Activated B cell treated with CpG ODN at 0.5 μM for 24 hours (primary cell): ENCODE measurements at regions of chr1 and their contacts with region 1.

Region 1: GRCh38 chr1:93021539-93022134 is 57.4 kb upstream of the MTF2 start:
- DNase-seq: no peak
- ATAC-seq: peak; percentile 91
- H3K4me3 Mint-ChIP-seq: no peak overlapping the region
- H3K27ac Mint-ChIP-seq: no peak overlapping the region
- H3K4me1 Mint-ChIP-seq: peaks cover 11% of the 10 kb centered on the region
- H3K27me3 Mint-ChIP-seq: peaks cover 2% of the 10 kb centered on the region
- CTCF ChIP-seq: peak; percentile 97

Region 2: DNA sequence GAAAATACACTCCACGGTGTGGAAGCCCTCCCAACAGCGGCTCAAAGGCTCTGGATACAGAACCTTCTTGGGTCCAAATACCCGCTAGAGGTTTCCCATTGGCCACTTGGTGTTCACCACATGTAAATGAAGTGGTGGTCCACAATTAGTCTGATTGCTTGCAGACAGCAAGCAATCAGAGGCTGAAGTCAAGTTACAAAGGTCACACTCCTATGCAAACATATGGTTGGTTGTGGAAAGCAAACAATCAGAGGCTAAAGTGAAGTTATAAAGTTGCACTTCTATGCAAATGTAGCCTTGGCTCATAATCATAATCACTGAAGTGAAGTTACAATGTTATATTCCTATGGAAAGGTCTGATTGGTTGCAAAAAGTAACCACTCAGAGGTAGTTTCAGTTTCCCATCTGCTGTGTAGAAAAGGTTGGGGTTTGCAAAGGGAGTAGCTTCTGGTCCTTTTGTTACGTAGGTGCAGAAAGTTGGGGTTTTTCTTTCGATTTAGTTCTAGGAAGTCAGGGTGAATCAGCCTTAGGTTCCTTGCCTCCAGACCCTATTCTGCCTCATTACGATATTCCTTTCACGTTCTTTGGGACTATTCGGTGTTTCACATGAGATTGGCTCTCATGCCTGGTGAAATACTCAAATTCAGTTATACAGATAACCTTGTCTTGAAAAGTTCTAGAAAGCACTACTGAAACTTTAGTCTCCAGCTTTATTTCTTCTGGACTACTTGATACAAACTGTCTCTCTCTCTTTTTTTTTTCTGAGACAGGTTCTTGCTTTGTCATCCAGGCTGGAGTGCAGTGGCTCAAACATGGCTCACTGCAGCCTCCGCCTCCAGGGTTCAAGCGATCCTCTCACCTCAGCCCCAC is 20.8 kb after region 1 on chr1:
- CTCF ChIA-PET with region 1: no interaction called
- POLR2A ChIA-PET with region 1: no interaction called
- intact Hi-C with region 1: no loop called
- DNase-seq: no peak
- ATAC-seq: peak; percentile 88
- H3K4me3 Mint-ChIP-seq: peak overlapping the region; percentile 75
- H3K27ac Mint-ChIP-seq: peak overlapping the region; percentile 80
- H3K4me1 Mint-ChIP-seq: peaks cover 24% of the 10 kb centered on the region
- H3K27me3 Mint-ChIP-seq: no peaks in the 10 kb centered on the region
- CTCF ChIP-seq: no peak

Region 3: GRCh38 chr1:93061895-93062792 is 40.5 kb after region 1 on chr1:
- CTCF ChIA-PET with region 1: interaction called, 97 read pairs
- POLR2A ChIA-PET with region 1: no interaction called
- intact Hi-C with region 1: loop called (anchors 1 kb)
- DNase-seq: no peak
- ATAC-seq: peak; percentile 82
- H3K4me3 Mint-ChIP-seq: no peak overlapping the region
- H3K27ac Mint-ChIP-seq: no peak overlapping the region
- H3K4me1 Mint-ChIP-seq: no peaks in the 10 kb centered on the region
- H3K27me3 Mint-ChIP-seq: peaks cover 13% of the 10 kb centered on the region
- CTCF ChIP-seq: no peak

Region 4: DNA sequence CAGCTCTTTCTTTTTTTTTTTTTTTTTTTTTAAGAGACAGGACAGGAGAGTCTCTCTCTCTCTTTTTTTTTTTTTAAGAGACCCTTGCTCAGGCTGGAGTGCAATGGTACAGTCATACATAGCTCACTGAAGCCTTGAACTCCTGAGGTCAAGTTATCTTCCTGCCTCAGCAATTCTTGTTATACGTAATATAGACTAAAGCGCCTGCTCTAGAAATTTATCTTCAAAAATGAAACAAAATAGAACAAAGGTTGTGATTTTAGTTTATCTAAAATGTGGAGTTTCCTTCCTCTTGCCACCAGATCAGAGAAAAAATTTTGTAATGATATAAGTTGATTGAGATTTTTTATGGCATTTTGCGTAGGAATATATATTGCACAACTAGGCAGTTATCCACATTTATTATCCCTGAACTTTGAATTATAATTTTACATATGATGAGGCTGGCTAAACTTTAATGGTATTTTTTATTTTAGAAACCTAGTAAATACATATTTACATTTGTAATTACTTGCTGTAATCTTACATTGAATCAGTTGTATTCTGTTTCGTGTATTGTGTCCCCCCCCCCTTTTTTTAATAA is 101.7 kb after region 1 on chr1:
- CTCF ChIA-PET with region 1: no interaction called
- POLR2A ChIA-PET with region 1: no interaction called
- intact Hi-C with region 1: loop called (anchors 5 kb)
- DNase-seq: no peak
- ATAC-seq: no peak
- H3K4me3 Mint-ChIP-seq: no peak overlapping the region
- H3K27ac Mint-ChIP-seq: no peak overlapping the region
- H3K4me1 Mint-ChIP-seq: no peaks in the 10 kb centered on the region
- H3K27me3 Mint-ChIP-seq: no peaks in the 10 kb centered on the region
- CTCF ChIP-seq: no peak

Region 5: GRCh38 chr1:93304716-93305138 is 283.1 kb after region 1 on chr1:
- CTCF ChIA-PET with region 1: interaction called, 3 read pairs
- POLR2A ChIA-PET with region 1: no interaction called
- intact Hi-C with region 1: loop called (anchors 5 kb)
- DNase-seq: no peak
- ATAC-seq: peak; percentile 71
- H3K4me3 Mint-ChIP-seq: no peak overlapping the region
- H3K27ac Mint-ChIP-seq: no peak overlapping the region
- H3K4me1 Mint-ChIP-seq: no peaks in the 10 kb centered on the region
- H3K27me3 Mint-ChIP-seq: no peaks in the 10 kb centered on the region
- CTCF ChIP-seq: peak; percentile 87